ENCODE measurements at regions of chr2 and their contacts with region 1.

Region 1: GRCh38 chr2:11712866-11713265 is 33.6 kb upstream of the LPIN1 start:
- DNase-seq: no peak
- H3K4me3 ChIP-seq: no peak overlapping the region
- H3K27ac ChIP-seq: no peak overlapping the region
- H3K4me1 ChIP-seq: peaks cover 0 to 7% of the 10 kb centered on the region in 2 donors
- H3K27me3 ChIP-seq: no peaks in the 10 kb centered on the region
- CTCF ChIP-seq: no peak
- POLR2A ChIP-seq: no peak

Region 2: GRCh38 chr2:11732587-11732986 is 19.7 kb after region 1 on chr2:
- intact Hi-C with region 1: loop called (anchors 1 kb)
- DNase-seq: no peak
- H3K4me3 ChIP-seq: no peak overlapping the region
- H3K27ac ChIP-seq: peak overlapping the region; percentile 7 to 51
- H3K4me1 ChIP-seq: no peaks in the 10 kb centered on the region
- H3K27me3 ChIP-seq: no peaks in the 10 kb centered on the region
- CTCF ChIP-seq: no peak
- POLR2A ChIP-seq: no peak

Region 3: GRCh38 chr2:11743846-11744553 is 31.1 kb after region 1 on chr2:
- intact Hi-C with region 1: no loop called
- DNase-seq: peak; percentile 75 to 92
- H3K4me3 ChIP-seq: peak overlapping the region in 2 of 3 donors; percentile 1 to 43
- H3K27ac ChIP-seq: peak overlapping the region; percentile 77 to 82
- H3K4me1 ChIP-seq: peaks cover 0 to 10% of the 10 kb centered on the region in 2 donors
- H3K27me3 ChIP-seq: no peaks in the 10 kb centered on the region
- CTCF ChIP-seq: no peak
- POLR2A ChIP-seq: no peak

Measured in breast epithelium (tissue), 4 donors.